ENCODE measurements at regions of chr3 and their contacts with region 1.

Region 1: DNA sequence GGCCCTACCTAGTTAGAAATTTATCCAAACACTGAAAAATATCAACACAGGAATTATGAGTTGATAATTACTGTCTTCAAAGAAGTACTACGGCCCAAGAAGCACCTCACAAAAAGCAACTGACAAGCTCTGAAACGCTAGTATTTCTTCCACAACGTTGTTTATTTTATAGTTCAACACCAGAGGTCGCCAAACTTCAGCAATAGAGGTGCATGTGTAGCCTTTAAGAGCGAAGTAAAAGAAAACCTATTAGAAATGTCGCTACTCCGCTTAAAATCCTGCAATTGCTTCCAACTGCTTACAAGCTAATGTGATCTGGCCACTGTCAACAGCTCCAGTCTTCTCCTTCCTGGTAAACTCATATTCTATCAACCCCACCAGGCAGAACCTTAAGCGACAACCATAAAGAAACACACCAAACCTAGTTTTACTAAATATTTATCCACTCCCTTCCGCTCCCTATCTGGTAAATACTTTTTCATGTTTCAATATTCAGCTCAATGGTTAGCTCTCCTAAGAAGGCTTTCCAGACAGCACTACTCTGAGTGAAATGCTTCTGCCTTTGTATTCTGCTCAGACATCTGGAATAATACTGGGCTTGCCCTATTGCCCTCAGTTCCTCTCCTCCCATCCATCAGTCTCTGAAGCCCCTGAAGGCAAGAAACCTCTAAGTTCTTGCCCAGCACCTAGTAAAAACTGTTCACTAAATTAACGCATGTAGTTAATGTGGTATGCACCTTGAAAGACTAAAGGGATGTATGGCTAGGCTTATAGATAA is 110.2 kb downstream of the NR1I2 start:
- DNase-seq: peak in 13 of 14 experiments; percentile 2 to 79 (median 20)
- ATAC-seq: peak; percentile 81
- H3K4me3 ChIP-seq: no peak overlapping the region
- H3K4me3 Mint-ChIP-seq: no peak overlapping the region
- H3K27ac ChIP-seq: no peak overlapping the region
- H3K27ac Mint-ChIP-seq: peak overlapping the region; percentile 53
- H3K4me1 ChIP-seq: no peaks in the 10 kb centered on the region
- H3K4me1 Mint-ChIP-seq: peaks cover 20% of the 10 kb centered on the region
- H3K27me3 ChIP-seq: no peaks in the 10 kb centered on the region
- H3K27me3 Mint-ChIP-seq: no peaks in the 10 kb centered on the region
- CTCF ChIP-seq: peak; percentile 84

Region 2: DNA sequence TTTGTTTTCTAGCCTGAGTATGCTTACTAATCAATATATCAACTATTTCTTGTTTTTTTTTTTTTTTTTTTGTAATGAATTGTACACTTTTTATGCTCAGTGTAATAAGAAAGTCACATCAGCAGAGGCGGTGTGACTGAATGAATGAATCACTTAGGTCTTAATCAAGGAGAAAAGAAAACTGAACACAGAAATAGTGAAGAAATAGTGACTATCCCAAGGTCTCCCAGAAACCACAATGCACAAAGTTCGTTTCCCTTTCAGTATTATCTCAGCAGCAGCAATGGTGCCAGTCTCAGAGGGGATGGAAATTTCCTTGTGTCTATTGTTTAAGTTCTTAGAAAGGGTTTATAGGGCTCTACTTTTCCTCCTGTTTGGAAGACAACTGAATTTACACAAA is 29.5 kb before region 1 on chr3:
- CTCF ChIA-PET with region 1: no interaction called
- POLR2A ChIA-PET with region 1: no interaction called
- intact Hi-C with region 1: no loop called
- DNase-seq: no peak
- ATAC-seq: no peak
- H3K4me3 ChIP-seq: no peak overlapping the region
- H3K4me3 Mint-ChIP-seq: no peak overlapping the region
- H3K27ac ChIP-seq: no peak overlapping the region
- H3K27ac Mint-ChIP-seq: no peak overlapping the region
- H3K4me1 ChIP-seq: no peaks in the 10 kb centered on the region
- H3K4me1 Mint-ChIP-seq: peaks cover 5% of the 10 kb centered on the region
- H3K27me3 ChIP-seq: no peaks in the 10 kb centered on the region
- H3K27me3 Mint-ChIP-seq: no peaks in the 10 kb centered on the region
- CTCF ChIP-seq: no peak

Region 3: DNA sequence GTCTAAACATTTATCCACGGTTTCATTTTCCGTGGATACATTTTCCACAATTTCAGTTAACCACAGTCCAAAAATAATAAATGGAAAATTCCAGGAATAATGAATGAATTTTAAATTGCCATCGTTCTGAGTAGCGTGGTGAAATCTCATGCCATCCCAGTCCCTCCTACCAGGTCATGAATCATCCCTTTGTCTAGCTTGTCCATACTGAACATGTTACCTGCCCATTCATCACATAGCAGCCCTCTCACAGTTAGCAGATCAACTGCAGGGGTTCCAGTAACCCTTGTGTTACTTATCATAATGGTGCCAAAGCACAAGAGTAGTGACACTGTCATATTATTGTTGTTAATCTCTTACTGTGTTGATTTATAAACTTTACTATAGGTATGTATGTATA is 77.6 kb after region 1 on chr3:
- CTCF ChIA-PET with region 1: no interaction called
- POLR2A ChIA-PET with region 1: no interaction called
- intact Hi-C with region 1: no loop called
- DNase-seq: no peak
- ATAC-seq: no peak
- H3K4me3 ChIP-seq: no peak overlapping the region
- H3K4me3 Mint-ChIP-seq: no peak overlapping the region
- H3K27ac ChIP-seq: no peak overlapping the region
- H3K27ac Mint-ChIP-seq: no peak overlapping the region
- H3K4me1 ChIP-seq: no peaks in the 10 kb centered on the region
- H3K4me1 Mint-ChIP-seq: peaks cover 39% of the 10 kb centered on the region
- H3K27me3 ChIP-seq: no peaks in the 10 kb centered on the region
- H3K27me3 Mint-ChIP-seq: no peaks in the 10 kb centered on the region
- CTCF ChIP-seq: no peak

Region 4: DNA sequence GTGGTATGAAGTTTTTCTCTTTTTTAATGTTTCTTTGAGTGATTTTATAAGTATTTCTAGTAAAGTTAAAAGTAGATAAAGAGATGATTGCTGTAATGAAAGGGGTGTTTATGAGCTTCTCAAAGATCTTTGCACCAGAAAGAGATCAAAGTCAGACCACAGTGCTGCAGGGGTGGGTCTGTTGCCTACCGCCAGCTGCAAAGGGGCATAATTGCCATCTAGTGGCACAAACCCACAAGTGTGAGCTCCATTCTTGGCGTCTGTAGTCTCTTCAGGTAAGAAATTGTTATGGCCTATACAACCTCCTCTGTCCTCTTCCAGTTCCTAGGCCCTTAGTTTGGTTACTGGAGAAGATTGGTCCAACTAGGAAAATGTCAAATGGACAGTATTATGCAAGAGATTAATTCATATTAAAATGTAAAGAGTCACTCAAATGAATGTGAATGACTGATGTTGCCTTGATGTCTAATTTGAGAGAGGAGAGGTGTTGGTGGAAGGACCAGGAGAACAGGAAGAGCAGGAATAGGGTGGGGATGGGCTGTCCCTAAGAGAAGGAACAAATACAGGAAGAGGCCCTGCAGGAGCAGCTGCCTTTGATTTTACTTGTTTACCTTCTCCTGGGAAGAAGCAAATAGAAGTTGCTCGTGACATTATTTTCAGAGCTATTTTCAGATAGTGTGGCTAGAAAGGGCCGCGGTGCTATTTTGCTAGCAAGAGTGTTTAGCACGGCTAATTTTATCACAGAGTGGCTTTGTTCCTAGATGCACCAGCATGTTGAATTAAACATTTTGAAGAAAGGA is 255.1 kb after region 1 on chr3:
- CTCF ChIA-PET with region 1: interaction called, 36 read pairs
- POLR2A ChIA-PET with region 1: interaction called, 12 read pairs
- intact Hi-C with region 1: loop called (anchors 1 kb)
- DNase-seq: peak; percentile 20 to 80 (median 50)
- ATAC-seq: peak; percentile 95
- H3K4me3 ChIP-seq: no peak overlapping the region
- H3K4me3 Mint-ChIP-seq: no peak overlapping the region
- H3K27ac ChIP-seq: no peak overlapping the region
- H3K27ac Mint-ChIP-seq: no peak overlapping the region
- H3K4me1 ChIP-seq: no peaks in the 10 kb centered on the region
- H3K4me1 Mint-ChIP-seq: peaks cover 17% of the 10 kb centered on the region
- H3K27me3 ChIP-seq: no peaks in the 10 kb centered on the region
- H3K27me3 Mint-ChIP-seq: no peaks in the 10 kb centered on the region
- CTCF ChIP-seq: peak; percentile 69

Region 5: DNA sequence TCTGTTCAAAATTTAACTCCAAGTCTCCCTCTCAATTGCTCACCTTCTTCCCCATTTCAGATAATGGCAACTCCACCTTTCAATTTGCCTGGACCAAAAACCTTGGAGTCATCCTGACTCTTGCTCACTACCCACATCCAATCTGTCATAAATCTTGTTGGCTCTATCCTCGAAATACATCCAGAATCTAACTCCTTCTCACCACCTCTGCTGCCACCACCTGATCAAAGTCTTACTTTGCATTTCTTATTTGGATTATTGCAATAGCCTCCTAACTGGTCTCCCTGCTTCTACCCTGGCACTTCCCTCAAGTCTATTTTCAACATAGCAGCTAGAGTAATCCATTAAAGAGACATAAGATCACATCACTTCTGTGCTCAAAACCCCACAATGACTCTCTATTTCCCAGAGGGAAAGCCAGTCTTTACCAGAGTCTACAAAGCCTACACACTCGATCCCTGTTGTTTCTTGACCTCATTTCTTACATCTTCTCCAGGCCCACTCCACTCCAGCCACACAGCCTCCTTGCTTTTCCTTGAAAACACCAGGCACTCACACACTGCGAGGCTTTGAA is 306.3 kb after region 1 on chr3:
- CTCF ChIA-PET with region 1: interaction called, 3 read pairs
- POLR2A ChIA-PET with region 1: no interaction called
- intact Hi-C with region 1: loop called (anchors 1 to 5 kb)
- DNase-seq: peak in 3 of 14 experiments; percentile 3 to 18 (median 15)
- ATAC-seq: no peak
- H3K4me3 ChIP-seq: no peak overlapping the region
- H3K4me3 Mint-ChIP-seq: no peak overlapping the region
- H3K27ac ChIP-seq: no peak overlapping the region
- H3K27ac Mint-ChIP-seq: no peak overlapping the region
- H3K4me1 ChIP-seq: no peaks in the 10 kb centered on the region
- H3K4me1 Mint-ChIP-seq: no peaks in the 10 kb centered on the region
- H3K27me3 ChIP-seq: no peaks in the 10 kb centered on the region
- H3K27me3 Mint-ChIP-seq: no peaks in the 10 kb centered on the region
- CTCF ChIP-seq: no peak

Region 6: GRCh38 chr3:120417272-120417911 is 525.3 kb after region 1 on chr3:
- CTCF ChIA-PET with region 1: interaction called, 4 read pairs
- POLR2A ChIA-PET with region 1: no interaction called
- intact Hi-C with region 1: loop called (anchors 1 kb)
- DNase-seq: peak; percentile 69 to 91 (median 76)
- ATAC-seq: peak; percentile 99
- H3K4me3 ChIP-seq: peak overlapping the region; percentile 51
- H3K4me3 Mint-ChIP-seq: peak overlapping the region; percentile 77
- H3K27ac ChIP-seq: no peak overlapping the region
- H3K27ac Mint-ChIP-seq: no peak overlapping the region
- H3K4me1 ChIP-seq: peaks cover 18% of the 10 kb centered on the region
- H3K4me1 Mint-ChIP-seq: peaks cover 14% of the 10 kb centered on the region
- H3K27me3 ChIP-seq: no peaks in the 10 kb centered on the region
- H3K27me3 Mint-ChIP-seq: peaks cover 5% of the 10 kb centered on the region
- CTCF ChIP-seq: peak; percentile 87

Region 7: GRCh38 chr3:120498556-120499346 is 606.6 kb after region 1 on chr3:
- CTCF ChIA-PET with region 1: no interaction called
- POLR2A ChIA-PET with region 1: no interaction called
- intact Hi-C with region 1: no loop called
- DNase-seq: peak in 1 of 14 experiments; percentile 5
- ATAC-seq: no peak
- H3K4me3 ChIP-seq: no peak overlapping the region
- H3K4me3 Mint-ChIP-seq: no peak overlapping the region
- H3K27ac ChIP-seq: no peak overlapping the region
- H3K27ac Mint-ChIP-seq: no peak overlapping the region
- H3K4me1 ChIP-seq: no peaks in the 10 kb centered on the region
- H3K4me1 Mint-ChIP-seq: no peaks in the 10 kb centered on the region
- H3K27me3 ChIP-seq: no peaks in the 10 kb centered on the region
- H3K27me3 Mint-ChIP-seq: no peaks in the 10 kb centered on the region
- CTCF ChIP-seq: no peak

Region 8: GRCh38 chr3:120558771-120559241 is 666.7 kb after region 1 on chr3:
- CTCF ChIA-PET with region 1: interaction called, 8 read pairs
- POLR2A ChIA-PET with region 1: interaction called, 3 read pairs
- intact Hi-C with region 1: loop called in 1 of 2 experiments (anchors 5 kb)
- DNase-seq: peak; percentile 74 to 94 (median 86)
- ATAC-seq: peak; percentile 93
- H3K4me3 ChIP-seq: peak overlapping the region; percentile 43
- H3K4me3 Mint-ChIP-seq: peak overlapping the region; percentile 78
- H3K27ac ChIP-seq: no peak overlapping the region
- H3K27ac Mint-ChIP-seq: peak overlapping the region; percentile 63
- H3K4me1 ChIP-seq: peaks cover 15% of the 10 kb centered on the region
- H3K4me1 Mint-ChIP-seq: peaks cover 24% of the 10 kb centered on the region
- H3K27me3 ChIP-seq: no peaks in the 10 kb centered on the region
- H3K27me3 Mint-ChIP-seq: peaks cover 16% of the 10 kb centered on the region
- CTCF ChIP-seq: peak; percentile 98

Measured in CD4-positive, alpha-beta T cell (primary cell).